ENCODE measurements at regions of chr12 and their contacts with region 1.

Region 1: GRCh38 chr12:5428332-5429221 is 3.3 kb upstream of the NTF3 start:
- DNase-seq: no peak
- H3K4me3 ChIP-seq: peak overlapping the region; percentile 42
- H3K27ac ChIP-seq: no peak overlapping the region
- H3K27me3 ChIP-seq: peaks cover 6% of the 10 kb centered on the region
- CTCF ChIP-seq: peak; percentile 80

Region 2: DNA sequence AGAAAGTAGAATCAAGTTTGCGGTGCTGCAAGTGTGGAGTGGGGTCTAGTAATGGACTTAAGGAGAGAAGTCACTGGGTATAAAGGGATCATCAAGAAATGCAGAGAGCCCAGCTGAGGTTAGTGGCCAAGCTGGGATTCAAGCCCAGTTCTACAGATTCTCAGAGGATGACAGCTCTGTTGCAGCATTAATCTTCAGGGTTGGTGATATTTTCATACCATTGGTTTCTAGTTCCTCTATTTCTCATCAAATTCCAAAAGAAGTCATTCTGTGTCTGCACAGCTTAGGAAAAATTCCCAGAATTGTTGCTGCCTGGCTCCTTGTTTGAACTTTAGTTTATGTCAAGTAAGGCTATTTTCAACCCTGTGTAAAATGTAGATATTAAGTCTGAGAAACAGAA is 166.1 kb before region 1 on chr12:
- CTCF ChIA-PET with region 1: no interaction called
- POLR2A ChIA-PET with region 1: no interaction called
- DNase-seq: peak; percentile 27
- H3K4me3 ChIP-seq: no peak overlapping the region
- H3K27ac ChIP-seq: no peak overlapping the region
- H3K27me3 ChIP-seq: no peaks in the 10 kb centered on the region
- CTCF ChIP-seq: no peak

Region 3: DNA sequence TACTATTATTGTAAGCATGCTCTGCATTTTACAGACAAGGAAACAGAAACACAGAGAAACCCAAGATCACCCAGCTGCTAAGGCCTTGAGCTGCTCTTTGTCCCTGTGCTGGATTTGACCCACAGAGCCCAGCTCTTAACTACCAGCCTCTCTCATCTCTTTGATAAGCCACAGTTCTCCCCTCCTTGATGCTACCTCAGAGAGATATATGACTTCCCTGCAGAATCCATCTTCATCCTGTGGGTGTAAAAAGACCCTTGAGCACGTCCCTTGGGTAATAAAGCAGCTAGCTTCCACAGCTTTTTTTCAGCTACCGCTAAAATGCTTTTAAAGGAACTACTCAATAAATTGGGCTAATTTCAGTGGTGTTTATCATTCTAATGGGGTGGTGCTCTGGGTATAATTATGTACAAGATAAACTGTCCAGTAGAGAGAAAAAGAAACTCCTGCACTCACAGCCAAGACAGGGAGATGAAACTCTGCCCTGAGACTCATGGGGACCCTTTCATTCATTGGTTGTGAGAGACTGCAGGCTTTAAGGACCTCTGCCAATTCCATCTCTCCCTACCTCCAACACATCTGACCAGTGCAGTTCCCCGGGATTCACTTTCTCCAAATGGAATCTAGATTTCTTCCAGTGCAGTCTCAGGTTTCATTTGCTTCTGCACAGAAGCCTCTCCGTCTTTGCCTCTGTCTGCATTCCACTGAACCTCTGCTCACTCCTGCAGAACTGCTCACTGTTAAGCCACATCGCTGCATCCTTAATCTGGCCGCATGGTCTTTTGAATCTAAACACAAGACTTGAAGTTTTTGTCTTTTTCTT is 21.3 kb before region 1 on chr12:
- CTCF ChIA-PET with region 1: interaction called, 20 read pairs
- POLR2A ChIA-PET with region 1: no interaction called
- DNase-seq: no peak
- H3K4me3 ChIP-seq: no peak overlapping the region
- H3K27ac ChIP-seq: no peak overlapping the region
- H3K27me3 ChIP-seq: peaks cover 13% of the 10 kb centered on the region
- CTCF ChIP-seq: no peak

Region 4: DNA sequence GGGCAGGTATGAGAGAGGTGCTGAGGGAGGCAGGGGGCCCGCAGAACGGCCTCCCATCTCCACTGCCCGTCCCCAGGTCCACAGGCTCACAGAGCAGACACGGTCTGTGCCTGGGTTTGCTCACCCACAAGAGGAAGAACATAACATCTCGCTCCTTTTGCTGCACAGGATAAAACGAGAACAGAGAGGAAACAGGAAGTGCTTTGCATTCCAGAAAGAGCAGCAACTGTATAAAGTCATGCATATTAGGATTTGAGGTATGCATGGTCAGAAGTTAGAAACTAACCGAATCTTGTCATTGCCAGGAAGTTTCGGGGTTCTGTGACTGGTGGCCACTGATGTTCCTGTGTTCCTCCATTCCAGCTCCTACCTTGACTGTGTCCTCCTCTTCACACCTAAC is 28.3 kb after region 1 on chr12:
- CTCF ChIA-PET with region 1: interaction called, 11 read pairs
- POLR2A ChIA-PET with region 1: interaction called, 4 read pairs
- DNase-seq: peak; percentile 57
- H3K4me3 ChIP-seq: no peak overlapping the region
- H3K27ac ChIP-seq: peak overlapping the region; percentile 95
- H3K27me3 ChIP-seq: no peaks in the 10 kb centered on the region
- CTCF ChIP-seq: no peak

Region 5: DNA sequence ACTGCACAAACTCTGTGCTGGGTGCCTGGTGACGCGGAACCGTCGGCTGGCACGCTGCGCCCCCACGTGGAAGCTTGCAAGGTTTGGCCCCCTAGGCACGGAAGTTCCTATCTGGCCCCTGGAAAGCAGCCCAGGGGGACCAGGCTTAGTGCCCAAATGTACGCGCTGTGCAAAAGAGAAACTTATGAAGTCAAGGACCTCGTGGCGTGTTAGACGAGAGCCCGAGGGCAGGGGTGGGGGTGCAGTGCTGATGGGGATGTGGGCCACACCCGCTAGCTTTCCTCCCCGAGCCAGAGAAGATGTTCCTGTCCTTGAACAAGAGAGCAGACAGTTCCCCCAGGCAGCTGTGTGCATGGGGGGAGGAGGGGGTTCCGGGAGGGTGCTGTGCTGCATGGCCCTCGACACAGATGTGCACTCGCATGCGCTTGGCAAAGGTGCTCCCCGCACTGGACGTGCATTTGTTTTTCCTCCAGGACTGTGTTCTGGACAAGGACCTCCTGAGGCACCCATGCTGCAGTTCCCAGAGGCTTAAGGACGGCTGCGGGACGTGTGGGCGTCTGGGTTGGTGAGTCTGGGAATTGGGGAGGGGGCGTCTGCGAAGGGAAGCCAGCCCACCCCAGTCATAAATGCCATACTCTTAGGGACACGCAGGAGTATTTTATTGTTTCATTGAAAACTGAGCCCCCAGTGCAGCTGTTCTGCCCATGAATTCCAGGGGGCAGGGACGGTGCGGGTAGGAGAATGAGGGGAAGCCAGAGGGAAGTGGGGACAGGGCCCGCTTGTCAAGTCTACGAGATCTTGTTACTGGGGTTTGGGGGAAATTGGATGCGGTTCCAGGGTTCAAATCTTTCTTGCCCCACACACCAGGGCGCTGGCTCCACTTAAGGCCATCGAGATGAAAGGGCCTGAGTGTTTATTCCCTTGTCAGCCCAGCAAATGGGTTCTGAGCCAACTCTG is 83.3 kb after region 1 on chr12:
- CTCF ChIA-PET with region 1: interaction called, 133 read pairs
- POLR2A ChIA-PET with region 1: interaction called, 7 read pairs
- DNase-seq: peak; percentile 23
- H3K4me3 ChIP-seq: 0 out of 2 replicates have a peak overlapping the region, but pooled peaks have one; percentile 10
- H3K27ac ChIP-seq: no peak overlapping the region
- H3K27me3 ChIP-seq: no peaks in the 10 kb centered on the region
- CTCF ChIP-seq: peak; percentile 78

Region 6: GRCh38 chr12:5648692-5649359 is 220.2 kb after region 1 on chr12:
- CTCF ChIA-PET with region 1: interaction called, 100 read pairs
- POLR2A ChIA-PET with region 1: no interaction called
- DNase-seq: peak; percentile 3
- H3K4me3 ChIP-seq: no peak overlapping the region
- H3K27ac ChIP-seq: no peak overlapping the region
- H3K27me3 ChIP-seq: peaks cover 17% of the 10 kb centered on the region
- CTCF ChIP-seq: peak; percentile 65

Region 7: DNA sequence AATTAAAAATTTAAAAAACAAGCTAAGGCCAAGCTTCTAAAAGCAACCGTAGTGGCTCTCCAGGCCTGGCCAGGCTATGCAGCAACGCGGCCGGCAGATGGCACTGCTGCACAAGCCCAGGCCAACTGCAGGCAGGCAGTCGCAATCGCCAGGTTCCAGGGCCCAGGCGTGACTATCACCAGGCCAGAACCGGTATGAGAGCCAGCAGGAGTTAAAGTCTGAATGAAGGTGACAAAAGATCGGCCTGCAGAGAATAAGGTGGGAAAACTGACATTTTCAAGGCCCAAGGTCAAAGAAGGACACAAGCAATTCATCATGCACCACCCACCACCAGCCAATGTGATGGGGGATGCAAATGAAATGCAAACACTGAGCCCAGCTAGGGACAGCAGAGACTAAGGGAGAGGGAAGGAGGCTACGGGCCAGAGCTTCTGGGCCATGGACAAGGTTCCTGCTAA is 560.1 kb after region 1 on chr12:
- CTCF ChIA-PET with region 1: interaction called, 16 read pairs
- POLR2A ChIA-PET with region 1: no interaction called
- DNase-seq: peak; percentile 43
- H3K4me3 ChIP-seq: no peak overlapping the region
- H3K27ac ChIP-seq: no peak overlapping the region
- H3K27me3 ChIP-seq: peaks cover 17% of the 10 kb centered on the region
- CTCF ChIP-seq: peak; percentile 99